ENCODE measurements at regions of chr2 and their contacts with region 1.

Region 1: GRCh38 chr2:225002039-225002655 is 40.1 kb downstream of the DOCK10 start:
- DNase-seq: peak; percentile 61
- H3K4me3 Mint-ChIP-seq: no peak overlapping the region
- H3K27ac Mint-ChIP-seq: no peak overlapping the region
- H3K4me1 Mint-ChIP-seq: peaks cover 38% of the 10 kb centered on the region
- H3K27me3 Mint-ChIP-seq: no peaks in the 10 kb centered on the region
- CTCF ChIP-seq: peak; percentile 77

Region 2: DNA sequence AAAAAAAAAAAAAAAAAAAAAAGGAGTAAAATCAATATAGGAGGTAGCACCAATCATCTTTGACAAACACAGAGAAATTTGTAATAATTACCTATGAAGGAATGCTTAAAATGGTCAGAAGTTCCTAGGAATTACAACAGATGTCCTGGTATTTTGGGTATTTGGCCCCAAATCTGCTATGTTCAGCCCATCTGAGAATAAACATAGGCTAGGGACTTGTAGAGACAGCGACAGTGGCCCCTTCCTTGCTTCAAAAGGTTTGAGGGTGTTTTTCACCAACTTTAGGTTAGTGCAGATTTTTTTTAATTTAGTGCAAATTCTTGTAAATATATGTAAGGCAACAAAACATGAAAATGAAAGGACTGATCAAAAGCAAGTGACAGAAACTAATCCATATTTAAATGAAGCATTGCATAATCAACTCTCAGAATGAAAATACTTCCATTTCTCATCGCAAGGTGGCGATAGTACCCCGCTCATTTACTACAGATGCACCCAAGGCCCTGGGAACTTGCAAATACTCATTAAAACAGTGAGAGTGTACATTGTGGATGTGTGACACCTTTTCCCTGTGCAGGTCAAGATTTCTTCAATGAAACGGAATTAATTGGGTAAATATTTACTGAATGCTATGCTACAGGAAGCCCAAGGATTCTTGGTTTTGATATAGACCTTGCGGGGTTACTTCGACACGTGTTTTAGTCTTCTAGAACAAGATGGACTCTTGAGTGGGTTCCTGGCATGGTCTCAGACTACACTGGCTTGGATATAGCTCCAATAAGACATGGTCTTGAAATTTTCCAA is 644.8 kb before region 1 on chr2:
- CTCF ChIA-PET with region 1: no interaction called
- intact Hi-C with region 1: loop called (anchors 10 kb)
- DNase-seq: peak; percentile 72
- H3K4me3 Mint-ChIP-seq: no peak overlapping the region
- H3K27ac Mint-ChIP-seq: no peak overlapping the region
- H3K4me1 Mint-ChIP-seq: no peaks in the 10 kb centered on the region
- H3K27me3 Mint-ChIP-seq: peaks cover 26% of the 10 kb centered on the region
- CTCF ChIP-seq: peak; percentile 49

Region 3: GRCh38 chr2:224392545-224392944 is 609.6 kb before region 1 on chr2:
- CTCF ChIA-PET with region 1: no interaction called
- intact Hi-C with region 1: no loop called
- DNase-seq: no peak
- H3K4me3 Mint-ChIP-seq: no peak overlapping the region
- H3K27ac Mint-ChIP-seq: no peak overlapping the region
- H3K4me1 Mint-ChIP-seq: no peaks in the 10 kb centered on the region
- H3K27me3 Mint-ChIP-seq: peaks cover 36% of the 10 kb centered on the region
- CTCF ChIP-seq: no peak

Region 4: DNA sequence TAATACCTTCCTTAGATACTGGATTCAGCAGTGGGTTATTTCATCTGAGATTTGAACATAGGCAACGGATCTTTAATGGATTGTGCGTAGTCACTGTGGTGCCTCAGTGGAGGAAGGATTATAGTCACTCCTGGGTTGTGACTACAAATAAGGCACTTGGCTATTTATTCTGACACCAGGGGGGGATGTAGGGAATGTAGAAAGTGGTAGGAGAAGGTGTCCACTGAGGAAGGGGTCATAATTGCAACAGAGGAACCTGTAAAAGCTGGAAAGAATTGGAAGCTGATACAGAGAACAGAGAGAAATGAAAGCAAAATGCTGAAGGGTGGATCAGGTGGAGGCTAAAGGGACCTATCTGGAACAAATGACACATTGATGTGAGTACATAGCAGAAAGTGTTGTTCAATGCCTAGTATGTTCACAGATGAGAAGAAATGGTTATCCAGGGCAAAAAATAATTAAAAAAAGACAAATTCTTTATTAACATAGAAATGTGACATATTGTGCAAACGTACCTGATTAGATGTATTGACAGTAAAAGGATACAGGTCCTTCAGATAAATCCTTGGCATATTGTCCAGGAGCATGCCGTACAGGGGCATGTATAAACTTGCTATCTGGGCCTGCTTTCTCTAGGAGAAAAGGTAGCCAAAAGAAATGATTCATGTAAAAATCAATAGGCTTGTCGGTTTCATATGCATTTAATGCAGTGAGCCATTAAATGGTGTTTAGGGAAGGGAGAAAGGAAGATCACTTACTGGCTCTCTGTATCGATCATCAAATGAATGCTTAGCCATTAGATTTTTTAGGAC is 194.8 kb before region 1 on chr2:
- CTCF ChIA-PET with region 1: no interaction called
- intact Hi-C with region 1: loop called (anchors 2 kb)
- DNase-seq: peak; percentile 14
- H3K4me3 Mint-ChIP-seq: no peak overlapping the region
- H3K27ac Mint-ChIP-seq: no peak overlapping the region
- H3K4me1 Mint-ChIP-seq: peaks cover 10% of the 10 kb centered on the region
- H3K27me3 Mint-ChIP-seq: no peaks in the 10 kb centered on the region
- CTCF ChIP-seq: peak; percentile 28

Region 5: GRCh38 chr2:224930990-224931389 is 71.2 kb before region 1 on chr2:
- CTCF ChIA-PET with region 1: interaction called, 4 read pairs
- intact Hi-C with region 1: loop called (anchors 1 kb)
- DNase-seq: no peak
- H3K4me3 Mint-ChIP-seq: no peak overlapping the region
- H3K27ac Mint-ChIP-seq: no peak overlapping the region
- H3K4me1 Mint-ChIP-seq: peaks cover 16% of the 10 kb centered on the region
- H3K27me3 Mint-ChIP-seq: no peaks in the 10 kb centered on the region
- CTCF ChIP-seq: no peak

Region 6: GRCh38 chr2:224952936-224953657 is 49.0 kb before region 1 on chr2:
- CTCF ChIA-PET with region 1: no interaction called
- intact Hi-C with region 1: no loop called
- DNase-seq: no peak
- H3K4me3 Mint-ChIP-seq: no peak overlapping the region
- H3K27ac Mint-ChIP-seq: no peak overlapping the region
- H3K4me1 Mint-ChIP-seq: peaks cover 11% of the 10 kb centered on the region
- H3K27me3 Mint-ChIP-seq: no peaks in the 10 kb centered on the region
- CTCF ChIP-seq: no peak

Region 7: DNA sequence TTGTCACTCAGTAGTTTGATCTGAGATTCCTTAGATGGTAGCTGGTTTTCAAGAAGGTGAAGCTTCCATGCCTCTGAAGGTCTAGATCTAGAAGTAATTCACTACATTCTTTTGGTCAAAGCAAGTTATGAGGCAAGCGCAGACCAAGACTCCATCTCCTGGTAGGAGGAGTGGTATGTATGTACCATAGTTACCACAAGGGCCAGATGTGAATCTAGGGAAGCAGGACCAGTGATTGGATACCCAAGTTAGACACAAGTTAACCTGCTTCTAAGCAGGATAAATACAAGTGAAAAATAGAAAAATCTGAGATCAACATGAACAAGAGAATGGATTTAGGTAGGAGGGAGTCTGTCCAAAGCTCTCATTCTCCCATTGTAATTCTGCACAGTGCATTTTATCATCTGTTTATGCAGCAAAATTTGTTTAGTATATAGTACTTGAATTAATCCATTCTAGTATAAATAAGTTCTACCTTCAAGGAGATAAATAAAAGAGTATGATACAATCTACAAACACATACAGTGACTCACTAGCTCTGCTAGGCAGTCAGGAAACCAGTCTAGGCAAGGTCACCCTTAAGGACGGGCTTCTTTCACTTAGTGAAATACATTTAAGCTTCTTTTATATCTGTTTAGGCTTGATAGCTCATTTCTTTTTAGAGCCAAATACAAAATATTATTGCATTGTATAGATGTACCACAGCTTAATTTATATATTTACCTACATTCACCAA is 54.4 kb after region 1 on chr2:
- CTCF ChIA-PET with region 1: no interaction called
- intact Hi-C with region 1: no loop called
- DNase-seq: no peak
- H3K4me3 Mint-ChIP-seq: no peak overlapping the region
- H3K27ac Mint-ChIP-seq: no peak overlapping the region
- H3K4me1 Mint-ChIP-seq: no peaks in the 10 kb centered on the region
- H3K27me3 Mint-ChIP-seq: no peaks in the 10 kb centered on the region
- CTCF ChIP-seq: no peak

Region 8: GRCh38 chr2:225660262-225661131 is 658.4 kb after region 1 on chr2:
- CTCF ChIA-PET with region 1: no interaction called
- intact Hi-C with region 1: loop called (anchors 1 kb)
- DNase-seq: peak; percentile 78
- H3K4me3 Mint-ChIP-seq: no peak overlapping the region
- H3K27ac Mint-ChIP-seq: no peak overlapping the region
- H3K4me1 Mint-ChIP-seq: no peaks in the 10 kb centered on the region
- H3K27me3 Mint-ChIP-seq: no peaks in the 10 kb centered on the region
- CTCF ChIP-seq: peak; percentile 81